ENCODE measurements at regions of chr7 and their contacts with region 1.

Region 1: GRCh38 chr7:26735976-26736600 is 128.3 kb downstream of the SKAP2 start:
- DNase-seq: no peak
- H3K4me3 ChIP-seq: no peak overlapping the region
- H3K27ac ChIP-seq: no peak overlapping the region
- H3K4me1 ChIP-seq: no peaks in the 10 kb centered on the region
- CTCF ChIP-seq: no peak

Region 2: DNA sequence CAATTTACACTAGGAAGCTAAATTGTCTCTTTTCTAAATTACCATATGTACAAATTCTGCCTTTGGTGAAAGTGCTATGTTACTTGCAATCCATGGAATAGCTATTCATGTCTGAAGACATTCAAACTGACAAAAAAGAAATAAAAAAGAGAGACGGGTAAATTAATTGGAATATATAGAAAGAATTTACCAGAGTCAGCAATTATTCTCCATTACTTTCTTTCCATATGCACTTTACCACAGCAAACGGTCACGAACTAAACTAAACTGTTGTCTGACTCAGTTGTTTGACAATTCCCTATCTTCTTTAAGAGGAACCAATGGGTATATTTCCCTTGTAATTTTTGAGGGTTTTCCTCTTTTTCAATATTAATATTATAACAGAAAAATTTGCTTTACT is 274.0 kb after region 1 on chr7:
- CTCF ChIA-PET with region 1: no interaction called
- POLR2A ChIA-PET with region 1: no interaction called
- intact Hi-C with region 1: no loop called
- DNase-seq: no peak
- H3K4me3 ChIP-seq: no peak overlapping the region
- H3K27ac ChIP-seq: no peak overlapping the region
- H3K4me1 ChIP-seq: no peaks in the 10 kb centered on the region
- CTCF ChIP-seq: no peak

Region 3: GRCh38 chr7:27130540-27131389 is 394.7 kb after region 1 on chr7 and contains the start of gene HOXA4:
- CTCF ChIA-PET with region 1: no interaction called
- POLR2A ChIA-PET with region 1: interaction called, 11 read pairs
- intact Hi-C with region 1: no loop called
- DNase-seq: peak; percentile 73
- H3K4me3 ChIP-seq: peak within 1 kb of the TSS; percentile 76
- H3K27ac ChIP-seq: peak within 1 kb of the TSS; percentile 14
- H3K4me1 ChIP-seq: peaks cover 4% of the 10 kb centered on the region
- CTCF ChIP-seq: no peak
- total RNA-seq, gene HOXA4: 0.75 TPM in 1 of 2 replicates, not detected in the other